IMR-90 (cell line): ENCODE measurements at regions of chr17 and their contacts with region 1.

Region 1: GRCh38 chr17:69346766-69347165 is 19.8 kb upstream of the ABCA5 start:
- DNase-seq: no peak
- ATAC-seq: no peak
- H3K4me3 ChIP-seq: no peak overlapping the region
- H3K27ac ChIP-seq: no peak overlapping the region
- H3K4me1 ChIP-seq: no peaks in the 10 kb centered on the region
- H3K27me3 ChIP-seq: peaks cover under 1% of the 10 kb centered on the region; the same call in 1 of the 2 replicates
- CTCF ChIP-seq: no peak
- POLR2A ChIP-seq: no peak
- RAD21 ChIP-seq: no peak

Region 2: GRCh38 chr17:69117855-69118784 is 228.6 kb before region 1 on chr17:
- CTCF ChIA-PET with region 1: no interaction called
- POLR2A ChIA-PET with region 1: no interaction called
- dilution Hi-C with region 1: no loop called
- in situ Hi-C with region 1: no loop called
- intact Hi-C with region 1: no loop called
- DNase-seq: no peak
- ATAC-seq: no peak
- H3K4me3 ChIP-seq: no peak overlapping the region
- H3K27ac ChIP-seq: no peak overlapping the region
- H3K4me1 ChIP-seq: no peaks in the 10 kb centered on the region
- H3K27me3 ChIP-seq: no peaks in the 10 kb centered on the region
- CTCF ChIP-seq: no peak
- POLR2A ChIP-seq: no peak
- RAD21 ChIP-seq: no peak

Region 3: DNA sequence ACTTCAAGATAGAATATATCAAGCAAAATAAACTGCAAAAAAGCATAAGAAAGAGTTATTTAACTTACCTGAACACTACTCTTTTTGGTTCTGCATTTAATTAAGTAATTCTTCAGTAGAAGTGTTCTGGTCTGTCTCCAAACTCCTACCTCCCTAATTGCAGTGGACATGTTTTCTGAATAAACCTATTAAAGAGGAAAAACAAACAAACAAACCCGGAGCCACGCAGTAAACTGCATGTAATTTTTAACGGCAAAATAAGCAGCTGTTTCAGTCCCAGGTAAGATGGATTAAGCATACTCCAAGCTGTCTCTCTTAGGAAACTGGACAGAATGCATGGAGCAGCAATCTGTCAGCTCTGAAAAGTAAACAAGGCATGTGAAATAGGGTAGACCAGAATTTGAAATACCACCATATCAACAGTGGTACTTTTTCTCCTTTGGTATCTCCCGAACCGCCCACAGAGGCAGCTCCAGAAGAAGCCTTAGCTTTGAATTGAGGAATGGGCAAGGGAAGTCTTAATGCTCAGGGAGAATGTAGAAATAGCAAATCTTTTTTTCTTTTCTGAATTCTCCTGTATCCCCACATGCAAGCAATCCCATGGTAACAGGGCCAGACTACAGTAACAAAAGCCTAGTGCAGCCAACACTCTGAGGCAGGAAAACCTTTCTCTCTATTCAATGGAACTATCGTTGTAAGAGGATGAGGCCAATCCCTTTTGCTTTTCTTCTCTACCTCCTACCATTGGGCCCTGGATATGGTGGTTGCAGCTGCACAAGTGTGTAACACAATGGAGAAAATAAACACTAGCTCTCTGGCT is 32.3 kb before region 1 on chr17:
- CTCF ChIA-PET with region 1: no interaction called
- POLR2A ChIA-PET with region 1: no interaction called
- dilution Hi-C with region 1: no loop called
- in situ Hi-C with region 1: no loop called
- intact Hi-C with region 1: no loop called
- DNase-seq: no peak
- ATAC-seq: no peak
- H3K4me3 ChIP-seq: no peak overlapping the region
- H3K27ac ChIP-seq: no peak overlapping the region
- H3K4me1 ChIP-seq: no peaks in the 10 kb centered on the region
- H3K27me3 ChIP-seq: no peaks in the 10 kb centered on the region
- CTCF ChIP-seq: no peak
- POLR2A ChIP-seq: no peak
- RAD21 ChIP-seq: no peak

Region 4: GRCh38 chr17:69367298-69367697 is 20.5 kb after region 1 on chr17:
- CTCF ChIA-PET with region 1: no interaction called
- POLR2A ChIA-PET with region 1: no interaction called
- dilution Hi-C with region 1: no loop called
- in situ Hi-C with region 1: no loop called
- intact Hi-C with region 1: loop called (anchors 1 kb)
- DNase-seq: no peak
- ATAC-seq: no peak
- H3K4me3 ChIP-seq: no peak overlapping the region
- H3K27ac ChIP-seq: no peak overlapping the region
- H3K4me1 ChIP-seq: no peaks in the 10 kb centered on the region
- H3K27me3 ChIP-seq: no peaks in the 10 kb centered on the region; the same call in 1 of the 2 replicates
- CTCF ChIP-seq: no peak
- POLR2A ChIP-seq: no peak
- RAD21 ChIP-seq: no peak

Region 5: GRCh38 chr17:69451416-69452394 is 104.9 kb after region 1 on chr17:
- CTCF ChIA-PET with region 1: no interaction called
- POLR2A ChIA-PET with region 1: no interaction called
- dilution Hi-C with region 1: no loop called
- in situ Hi-C with region 1: no loop called
- intact Hi-C with region 1: loop called (anchors 5 kb)
- DNase-seq: no peak
- ATAC-seq: no peak
- H3K4me3 ChIP-seq: no peak overlapping the region
- H3K27ac ChIP-seq: no peak overlapping the region
- H3K4me1 ChIP-seq: peaks cover 4% of the 10 kb centered on the region; the same call in 1 of the 2 replicates
- H3K27me3 ChIP-seq: no peaks in the 10 kb centered on the region
- CTCF ChIP-seq: no peak
- POLR2A ChIP-seq: no peak
- RAD21 ChIP-seq: no peak

Region 6: DNA sequence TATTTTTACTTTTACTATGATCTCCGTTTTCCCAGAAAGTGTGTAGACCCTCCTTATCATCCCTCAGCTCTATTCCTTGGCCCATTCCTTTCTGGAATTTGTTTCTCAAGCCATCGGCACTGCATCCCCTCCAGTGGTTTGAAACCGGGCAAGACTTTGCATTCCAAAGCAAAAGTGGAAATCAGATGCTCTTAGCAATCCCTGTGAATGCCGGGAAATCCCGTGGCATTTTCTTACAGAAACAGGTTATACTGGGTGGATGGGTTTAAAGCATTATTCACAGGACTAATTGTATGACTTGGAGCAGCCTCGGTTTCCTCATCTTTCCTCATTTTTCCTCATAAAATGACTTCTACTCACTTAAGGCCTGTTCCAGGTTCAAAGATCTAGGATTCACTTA is 119.7 kb after region 1 on chr17:
- CTCF ChIA-PET with region 1: no interaction called
- POLR2A ChIA-PET with region 1: no interaction called
- dilution Hi-C with region 1: no loop called
- in situ Hi-C with region 1: no loop called
- intact Hi-C with region 1: no loop called
- DNase-seq: no peak
- ATAC-seq: no peak
- H3K4me3 ChIP-seq: no peak overlapping the region
- H3K27ac ChIP-seq: no peak overlapping the region
- H3K4me1 ChIP-seq: no peaks in the 10 kb centered on the region
- H3K27me3 ChIP-seq: no peaks in the 10 kb centered on the region
- CTCF ChIP-seq: no peak
- POLR2A ChIP-seq: no peak
- RAD21 ChIP-seq: no peak